ENCODE measurements at regions of chr12 and their contacts with region 1.

Region 1: DNA sequence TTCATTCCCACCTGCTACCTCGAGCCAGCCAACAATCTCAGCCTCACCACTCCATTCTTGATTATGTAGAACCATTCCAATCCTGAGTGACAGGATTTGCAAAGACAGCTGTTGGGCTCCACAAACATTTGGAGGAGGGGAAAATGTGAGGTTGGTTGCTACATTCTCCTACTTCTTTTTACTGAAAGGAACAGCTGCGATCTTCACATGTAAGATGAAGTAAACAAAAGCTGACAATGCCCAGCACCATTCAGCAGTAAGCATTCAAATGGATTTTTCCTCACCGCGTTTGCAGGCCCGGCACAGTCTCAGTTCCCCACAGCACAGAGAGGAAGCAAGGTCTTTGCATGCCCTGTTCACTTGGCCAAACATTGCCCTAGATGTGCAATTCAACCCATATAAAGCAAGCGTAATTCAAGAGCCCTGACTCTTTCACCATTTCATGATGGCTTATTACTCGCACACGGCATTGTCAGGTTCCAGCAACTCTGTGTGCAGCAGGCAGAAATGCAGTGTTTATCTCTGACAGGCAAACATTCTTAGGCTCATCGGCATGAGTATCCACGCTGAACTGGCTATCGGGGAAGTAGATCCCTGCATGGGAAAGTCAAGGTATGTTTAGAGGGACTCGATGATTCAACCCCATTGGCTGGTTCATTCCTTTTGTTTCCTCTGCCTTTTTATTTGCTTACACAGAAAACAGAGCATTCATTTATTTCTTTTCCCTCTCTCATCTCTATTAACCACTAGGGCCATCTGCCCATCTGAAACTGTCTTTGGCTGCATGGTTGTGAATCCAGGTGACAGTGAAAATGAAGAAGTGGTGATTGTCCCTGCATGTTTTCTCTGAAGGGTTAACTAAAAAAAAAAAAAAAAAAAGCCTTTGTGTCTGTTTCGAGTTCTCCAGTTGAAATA is 236.1 kb upstream of the PLEKHG7 start:
- DNase-seq: no peak
- CTCF ChIP-seq: no peak

Region 2: GRCh38 chr12:92570056-92570753 is 103.6 kb after region 1 on chr12:
- in situ Hi-C with region 1: loop called (anchors 25 kb)
- DNase-seq: peak; percentile 45
- CTCF ChIP-seq: peak; percentile 41

Measured in GM13976 (cell line).